Activated CD4-positive, alpha-beta memory T cell treated with anti-CD3 and anti-CD28 coated beads for 36 hours (primary cell): ENCODE measurements at regions of chr3 and their contacts with region 1.

Region 1: GRCh38 chr3:8987645-8988383 is 24.5 kb upstream of the RAD18 start:
- DNase-seq: peak; percentile 79
- H3K4me3 Mint-ChIP-seq: no peak overlapping the region
- H3K27ac Mint-ChIP-seq: no peak overlapping the region
- H3K4me1 Mint-ChIP-seq: peaks cover 3% of the 10 kb centered on the region
- H3K27me3 Mint-ChIP-seq: no peaks in the 10 kb centered on the region

Region 2: GRCh38 chr3:8970971-8971589 is 16.7 kb before region 1 on chr3:
- CTCF ChIA-PET with region 1: interaction called, 24 read pairs
- POLR2A ChIA-PET with region 1: no interaction called
- intact Hi-C with region 1: no loop called
- DNase-seq: peak; percentile 79
- H3K4me3 Mint-ChIP-seq: no peak overlapping the region
- H3K27ac Mint-ChIP-seq: no peak overlapping the region
- H3K4me1 Mint-ChIP-seq: peaks cover 3% of the 10 kb centered on the region
- H3K27me3 Mint-ChIP-seq: peaks cover 2% of the 10 kb centered on the region

Region 3: DNA sequence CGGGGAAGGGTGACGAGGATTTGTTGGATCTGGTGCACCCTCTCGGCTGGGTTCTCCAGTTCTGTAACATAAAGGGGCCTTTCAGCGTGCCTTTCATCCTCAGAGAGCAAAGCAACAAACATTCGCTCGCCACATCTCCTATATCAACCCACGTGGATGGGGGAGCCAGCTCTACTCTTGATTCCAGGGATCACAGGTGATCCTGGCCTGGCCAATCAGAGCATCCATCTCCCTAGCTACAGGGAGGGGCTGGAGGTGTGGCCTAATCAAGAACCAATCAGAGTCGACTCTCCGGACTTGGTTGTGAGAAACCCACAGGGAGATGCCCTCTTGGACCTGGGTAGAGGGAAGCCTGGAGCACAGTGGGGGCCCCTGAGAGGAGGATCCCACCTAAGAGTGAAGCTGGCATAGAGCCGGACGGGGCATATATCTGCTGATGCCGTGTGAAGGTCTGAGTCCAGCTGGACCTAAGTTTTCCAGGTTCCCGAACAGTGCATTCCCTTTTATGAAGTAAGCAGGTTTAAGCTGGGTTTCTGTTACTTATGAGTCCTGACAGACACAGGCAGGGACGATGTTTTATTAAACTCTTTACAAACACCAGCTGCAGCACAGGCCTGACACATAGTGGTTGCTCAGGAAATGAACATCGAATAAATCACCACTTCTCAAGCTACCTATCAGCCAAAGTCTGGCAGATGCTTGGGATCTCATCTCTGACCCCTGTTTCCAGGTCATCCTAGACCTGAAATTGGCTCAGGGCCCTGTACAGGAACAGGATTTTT is 26.2 kb after region 1 on chr3:
- CTCF ChIA-PET with region 1: interaction called, 20 read pairs
- POLR2A ChIA-PET with region 1: no interaction called
- intact Hi-C with region 1: no loop called
- DNase-seq: no peak
- H3K4me3 Mint-ChIP-seq: no peak overlapping the region
- H3K27ac Mint-ChIP-seq: no peak overlapping the region
- H3K4me1 Mint-ChIP-seq: peaks cover 12% of the 10 kb centered on the region
- H3K27me3 Mint-ChIP-seq: no peaks in the 10 kb centered on the region

Region 4: GRCh38 chr3:9067352-9067975 is 79.7 kb after region 1 on chr3:
- CTCF ChIA-PET with region 1: interaction called, 24 read pairs
- POLR2A ChIA-PET with region 1: no interaction called
- intact Hi-C with region 1: loop called (anchors 1 kb)
- DNase-seq: peak; percentile 40
- H3K4me3 Mint-ChIP-seq: no peak overlapping the region
- H3K27ac Mint-ChIP-seq: no peak overlapping the region
- H3K4me1 Mint-ChIP-seq: no peaks in the 10 kb centered on the region
- H3K27me3 Mint-ChIP-seq: no peaks in the 10 kb centered on the region

Region 5: DNA sequence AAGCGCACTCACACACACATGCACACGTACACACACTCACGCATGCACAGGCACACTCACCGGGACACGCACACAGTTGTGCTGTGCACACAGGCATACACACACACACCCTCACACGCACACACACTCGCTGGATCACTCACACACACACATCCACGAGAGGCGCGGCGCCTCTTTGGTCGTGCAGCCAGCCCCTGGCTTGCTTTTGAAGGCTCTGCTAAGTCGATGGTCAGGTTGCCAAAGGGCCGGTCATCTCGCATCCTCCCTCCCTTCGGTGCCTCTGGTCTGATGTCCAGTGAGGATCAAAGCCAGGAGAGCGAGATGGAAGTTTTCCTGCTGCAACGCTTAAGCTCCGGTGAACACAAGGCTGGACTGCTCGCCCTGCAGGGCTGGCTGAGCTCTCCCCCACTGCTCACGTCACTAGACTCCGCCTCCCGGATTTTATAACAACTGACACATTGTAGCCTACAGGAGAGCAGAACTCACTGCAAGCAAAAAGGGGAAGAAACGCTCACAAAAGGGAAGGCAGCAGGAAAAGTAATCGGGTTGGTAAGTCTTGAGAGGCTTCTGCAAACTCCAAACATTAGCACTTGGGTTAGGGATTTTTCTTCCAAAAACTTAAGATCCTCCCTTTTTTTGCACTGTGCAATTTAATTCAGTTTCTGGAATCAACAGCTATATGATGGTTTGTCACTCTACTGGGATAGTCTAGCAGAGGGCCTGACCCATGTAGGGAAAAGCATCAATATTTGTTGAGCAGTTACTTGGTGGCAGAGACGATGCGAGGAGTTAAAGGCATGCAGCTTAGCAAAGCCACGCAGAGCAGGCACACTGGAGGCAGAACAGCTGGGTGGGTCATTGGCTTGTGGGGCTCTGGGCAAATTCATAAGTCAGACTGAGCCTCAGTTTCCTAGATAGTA is 261.7 kb after region 1 on chr3 and contains the start of gene SRGAP3:
- CTCF ChIA-PET with region 1: interaction called, 13 read pairs
- POLR2A ChIA-PET with region 1: no interaction called
- intact Hi-C with region 1: no loop called
- DNase-seq: peak; percentile 83
- H3K4me3 Mint-ChIP-seq: peak within 1 kb of the TSS; percentile 70
- H3K27ac Mint-ChIP-seq: no peak within 1 kb of the TSS
- H3K4me1 Mint-ChIP-seq: peaks cover 19% of the 10 kb centered on the region
- H3K27me3 Mint-ChIP-seq: no peaks in the 10 kb centered on the region
- total RNA-seq, gene SRGAP3: 2.2 to 3.5 TPM